B cell (primary cell): ENCODE measurements at regions of chrX and their contacts with region 1.

Region 1: GRCh38 chrX:123833387-123833786 is 26.5 kb upstream of the XIAP start:
- DNase-seq: peak; percentile 70
- ATAC-seq: peak; percentile 72
- H3K4me3 ChIP-seq: no peak overlapping the region
- H3K4me3 Mint-ChIP-seq: no peak overlapping the region
- H3K27ac ChIP-seq: no peak overlapping the region
- H3K27ac Mint-ChIP-seq: no peak overlapping the region
- H3K4me1 ChIP-seq: peaks cover 11 to 18% of the 10 kb centered on the region in 2 donors
- H3K4me1 Mint-ChIP-seq: peaks cover 18% of the 10 kb centered on the region
- H3K27me3 ChIP-seq: no peaks in the 10 kb centered on the region
- H3K27me3 Mint-ChIP-seq: no peaks in the 10 kb centered on the region
- CTCF ChIP-seq: peak; percentile 78

Region 2: GRCh38 chrX:123884809-123885408 is 51.5 kb after region 1 on chrX:
- CTCF ChIA-PET with region 1: interaction called, 18 read pairs
- POLR2A ChIA-PET with region 1: no interaction called
- intact Hi-C with region 1: loop called (anchors 1 kb)
- DNase-seq: peak; percentile 65
- ATAC-seq: peak; percentile 58
- H3K4me3 ChIP-seq: no peak overlapping the region
- H3K4me3 Mint-ChIP-seq: no peak overlapping the region
- H3K27ac ChIP-seq: no peak overlapping the region
- H3K27ac Mint-ChIP-seq: no peak overlapping the region
- H3K4me1 ChIP-seq: no peaks in the 10 kb centered on the region
- H3K4me1 Mint-ChIP-seq: peaks cover 11% of the 10 kb centered on the region
- H3K27me3 ChIP-seq: no peaks in the 10 kb centered on the region
- H3K27me3 Mint-ChIP-seq: no peaks in the 10 kb centered on the region
- CTCF ChIP-seq: peak; percentile 67

Region 3: DNA sequence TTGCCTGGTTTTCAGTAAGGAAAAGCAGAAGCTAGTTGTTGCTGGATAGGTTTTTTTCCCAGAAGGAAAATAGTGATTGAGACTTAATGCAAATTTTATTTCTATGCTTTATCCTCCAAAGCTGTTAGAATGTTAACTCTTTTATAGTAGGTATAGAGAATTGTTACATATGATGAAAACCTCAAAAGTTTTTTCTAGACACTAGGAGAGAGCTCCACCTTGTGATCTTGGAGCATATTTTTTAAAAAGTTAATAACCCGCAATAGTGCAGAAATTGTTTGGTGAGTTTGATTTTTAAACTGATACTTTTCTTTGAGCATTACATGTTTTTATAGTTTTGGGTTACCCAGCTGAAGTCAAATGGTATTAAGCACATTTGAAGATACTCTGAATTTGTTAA is 184.6 kb after region 1 on chrX:
- CTCF ChIA-PET with region 1: interaction called, 10 read pairs
- POLR2A ChIA-PET with region 1: no interaction called
- intact Hi-C with region 1: loop called (anchors 5 kb)
- DNase-seq: peak; percentile 22
- ATAC-seq: no peak
- H3K4me3 ChIP-seq: no peak overlapping the region
- H3K4me3 Mint-ChIP-seq: no peak overlapping the region
- H3K27ac ChIP-seq: no peak overlapping the region
- H3K27ac Mint-ChIP-seq: peak overlapping the region; percentile 50
- H3K4me1 ChIP-seq: no peaks in the 10 kb centered on the region
- H3K4me1 Mint-ChIP-seq: peaks cover 34% of the 10 kb centered on the region
- H3K27me3 ChIP-seq: no peaks in the 10 kb centered on the region
- H3K27me3 Mint-ChIP-seq: no peaks in the 10 kb centered on the region
- CTCF ChIP-seq: peak; percentile 26